ENCODE measurements at regions of chr9 and their contacts with region 1.

Region 1: GRCh38 chr9:127690297-127690696 is 16.5 kb upstream of the CFAP157 start:
- DNase-seq: no peak
- H3K4me3 ChIP-seq: no peak overlapping the region
- H3K4me3 Mint-ChIP-seq: no peak overlapping the region
- H3K27ac Mint-ChIP-seq: no peak overlapping the region
- H3K4me1 ChIP-seq: peaks cover 6% of the 10 kb centered on the region
- H3K4me1 Mint-ChIP-seq: no peaks in the 10 kb centered on the region
- H3K27me3 ChIP-seq: no peaks in the 10 kb centered on the region
- H3K27me3 Mint-ChIP-seq: no peaks in the 10 kb centered on the region
- CTCF ChIP-seq: no peak

Region 2: DNA sequence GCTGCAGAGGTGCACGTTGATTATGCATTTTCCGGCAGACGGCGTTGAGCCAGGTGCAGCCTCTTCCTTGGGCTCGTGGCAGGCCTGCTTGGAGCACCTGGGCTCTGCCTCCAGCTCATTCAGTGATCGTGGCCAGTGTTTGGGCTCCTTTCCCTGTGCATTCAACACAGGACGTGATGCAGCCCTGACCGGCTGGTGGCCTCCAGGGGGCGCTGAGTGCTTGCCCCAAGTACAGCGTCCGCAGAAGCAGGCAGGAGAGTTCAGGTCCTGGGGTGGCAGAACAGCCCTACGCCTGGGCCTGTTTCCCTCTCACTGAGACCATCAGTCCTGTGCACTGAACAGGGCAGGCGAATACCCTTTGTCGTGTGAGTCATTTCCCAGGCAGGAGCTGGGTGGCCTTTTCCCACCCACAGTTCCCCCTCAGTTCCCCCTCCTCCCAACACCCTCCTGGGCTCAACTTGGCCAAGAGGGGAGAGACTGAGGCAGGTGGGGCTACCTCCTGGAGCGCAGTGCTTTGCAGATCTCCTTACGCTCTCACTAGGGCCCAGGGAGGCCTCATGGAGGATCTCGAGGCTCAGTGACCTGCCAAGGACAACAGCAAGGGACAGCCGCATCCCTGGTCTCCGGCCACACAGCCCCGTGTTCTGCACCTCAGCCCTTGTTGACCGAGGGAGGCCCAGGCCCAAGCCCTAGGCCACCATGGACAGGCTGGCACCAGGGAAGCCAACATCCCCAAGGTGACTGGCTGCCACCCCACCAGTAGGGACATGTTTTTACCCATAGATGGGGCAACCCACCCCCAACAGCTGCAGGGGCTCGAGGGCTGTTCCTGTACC is 186.1 kb before region 1 on chr9:
- CTCF ChIA-PET with region 1: no interaction called
- POLR2A ChIA-PET with region 1: no interaction called
- intact Hi-C with region 1: no loop called
- DNase-seq: peak; percentile 87
- H3K4me3 ChIP-seq: no peak overlapping the region
- H3K4me3 Mint-ChIP-seq: no peak overlapping the region
- H3K27ac Mint-ChIP-seq: no peak overlapping the region
- H3K4me1 ChIP-seq: no peaks in the 10 kb centered on the region
- H3K4me1 Mint-ChIP-seq: no peaks in the 10 kb centered on the region
- H3K27me3 ChIP-seq: no peaks in the 10 kb centered on the region
- H3K27me3 Mint-ChIP-seq: no peaks in the 10 kb centered on the region
- CTCF ChIP-seq: peak; percentile 90 to 94

Region 3: GRCh38 chr9:127651697-127652610 is 38.3 kb before region 1 on chr9:
- CTCF ChIA-PET with region 1: interaction called, 13 read pairs
- POLR2A ChIA-PET with region 1: no interaction called
- intact Hi-C with region 1: no loop called
- DNase-seq: no peak
- H3K4me3 ChIP-seq: no peak overlapping the region
- H3K4me3 Mint-ChIP-seq: no peak overlapping the region
- H3K27ac Mint-ChIP-seq: no peak overlapping the region
- H3K4me1 ChIP-seq: no peaks in the 10 kb centered on the region
- H3K4me1 Mint-ChIP-seq: no peaks in the 10 kb centered on the region
- H3K27me3 ChIP-seq: no peaks in the 10 kb centered on the region
- H3K27me3 Mint-ChIP-seq: peaks cover 4% of the 10 kb centered on the region
- CTCF ChIP-seq: no peak